ENCODE measurements at regions of chr11 and their contacts with region 1.

Region 1: GRCh38 chr11:17722000-17722643 is 2.8 kb downstream of the MYOD1 start:
- DNase-seq: no peak
- H3K4me3 ChIP-seq: no peak overlapping the region
- H3K27ac ChIP-seq: no peak overlapping the region
- H3K4me1 ChIP-seq: no peaks in the 10 kb centered on the region
- H3K27me3 ChIP-seq: peaks cover 42% of the 10 kb centered on the region
- CTCF ChIP-seq: peak in 1 of 2 donors; percentile 47

Region 2: DNA sequence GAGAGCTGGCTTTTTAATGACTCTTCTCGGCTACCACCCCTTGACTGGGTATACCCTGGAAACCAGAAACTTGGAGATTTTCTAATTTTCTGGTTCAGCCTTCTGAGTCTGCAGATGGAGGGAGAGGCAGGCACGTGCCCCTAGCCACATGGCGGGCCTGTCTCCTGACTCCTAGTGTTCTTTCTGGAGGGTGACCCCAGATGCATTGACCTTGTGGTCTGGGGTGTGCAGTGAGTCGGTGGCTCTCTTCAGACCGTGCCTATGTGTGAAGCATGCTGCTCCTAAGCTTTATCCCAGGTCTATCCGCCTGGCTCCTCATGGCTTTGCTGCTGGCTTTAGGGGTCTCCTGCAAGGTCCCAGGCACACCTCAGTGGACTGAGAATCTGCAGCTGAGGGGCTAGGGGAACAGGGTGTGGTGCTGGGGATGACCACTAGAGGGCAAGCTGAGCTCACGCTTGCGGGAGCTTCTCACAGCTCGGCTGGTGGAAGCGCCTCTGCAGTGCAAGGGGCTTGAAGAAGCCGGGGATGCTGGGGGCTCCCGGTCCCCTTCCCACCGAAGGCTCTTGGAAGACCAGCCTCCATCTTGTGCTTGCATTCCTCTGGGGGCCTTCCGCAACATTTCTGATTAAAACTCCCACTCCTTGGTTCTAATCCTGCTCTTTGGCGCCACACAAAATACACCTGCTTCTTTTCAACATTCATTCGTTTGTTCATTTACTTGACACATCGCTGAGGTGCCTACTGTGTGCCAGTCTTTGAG is 123.2 kb before region 1 on chr11:
- CTCF ChIA-PET with region 1: no interaction called
- dilution Hi-C with region 1: no loop called
- in situ Hi-C with region 1: loop called in 1 of 2 experiments (anchors 5 kb)
- intact Hi-C with region 1: loop called (anchors 2 kb)
- DNase-seq: peak; percentile 20
- H3K4me3 ChIP-seq: no peak overlapping the region
- H3K27ac ChIP-seq: no peak overlapping the region
- H3K4me1 ChIP-seq: no peaks in the 10 kb centered on the region
- H3K27me3 ChIP-seq: no peaks in the 10 kb centered on the region
- CTCF ChIP-seq: peak; percentile 96 to 97

Region 3: DNA sequence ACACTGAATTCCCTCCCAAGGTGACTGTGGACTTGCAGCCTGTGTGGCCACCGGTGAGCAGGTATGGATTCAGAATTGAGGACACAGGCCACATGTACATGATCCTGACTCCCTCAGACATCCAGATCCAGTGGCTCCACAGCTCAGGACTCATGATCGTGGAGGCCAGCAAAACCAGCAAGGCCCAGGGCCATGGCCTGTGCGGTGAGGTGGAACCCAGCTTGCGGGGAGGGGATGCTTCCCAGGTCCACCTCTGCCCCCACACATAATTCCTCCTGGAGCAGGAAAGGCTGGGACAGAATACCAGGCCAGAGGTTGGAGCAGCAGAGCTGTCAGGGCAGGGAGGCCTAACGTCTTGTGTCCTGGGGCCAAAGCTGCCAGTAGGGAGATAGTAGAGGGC is 93.0 kb before region 1 on chr11:
- CTCF ChIA-PET with region 1: no interaction called
- dilution Hi-C with region 1: loop called (anchors 5 kb)
- in situ Hi-C with region 1: no loop called
- intact Hi-C with region 1: no loop called
- DNase-seq: no peak
- H3K4me3 ChIP-seq: no peak overlapping the region
- H3K27ac ChIP-seq: no peak overlapping the region
- H3K4me1 ChIP-seq: no peaks in the 10 kb centered on the region
- H3K27me3 ChIP-seq: peaks cover 4% of the 10 kb centered on the region
- CTCF ChIP-seq: no peak

Region 4: GRCh38 chr11:17668166-17668565 is 54.0 kb before region 1 on chr11:
- CTCF ChIA-PET with region 1: no interaction called
- dilution Hi-C with region 1: loop called (anchors 5 kb)
- in situ Hi-C with region 1: no loop called
- intact Hi-C with region 1: no loop called
- DNase-seq: no peak
- H3K4me3 ChIP-seq: no peak overlapping the region
- H3K27ac ChIP-seq: no peak overlapping the region
- H3K4me1 ChIP-seq: no peaks in the 10 kb centered on the region
- H3K27me3 ChIP-seq: peaks cover 3% of the 10 kb centered on the region
- CTCF ChIP-seq: no peak

Region 5: GRCh38 chr11:17803754-17804334 is 81.7 kb after region 1 on chr11:
- CTCF ChIA-PET with region 1: no interaction called
- dilution Hi-C with region 1: no loop called
- in situ Hi-C with region 1: no loop called
- intact Hi-C with region 1: no loop called
- DNase-seq: no peak
- H3K4me3 ChIP-seq: no peak overlapping the region
- H3K27ac ChIP-seq: no peak overlapping the region
- H3K4me1 ChIP-seq: peaks cover 4% of the 10 kb centered on the region
- H3K27me3 ChIP-seq: no peaks in the 10 kb centered on the region
- CTCF ChIP-seq: no peak

Region 6: GRCh38 chr11:17846852-17847453 is 124.8 kb after region 1 on chr11:
- CTCF ChIA-PET with region 1: no interaction called
- dilution Hi-C with region 1: no loop called
- in situ Hi-C with region 1: no loop called
- intact Hi-C with region 1: no loop called
- DNase-seq: peak; percentile 31
- H3K4me3 ChIP-seq: no peak overlapping the region
- H3K27ac ChIP-seq: no peak overlapping the region
- H3K4me1 ChIP-seq: peaks cover 18% of the 10 kb centered on the region
- H3K27me3 ChIP-seq: no peaks in the 10 kb centered on the region
- CTCF ChIP-seq: peak; percentile 28 to 51